ENCODE measurements at regions of chr18 and their contacts with region 1.

Region 1: DNA sequence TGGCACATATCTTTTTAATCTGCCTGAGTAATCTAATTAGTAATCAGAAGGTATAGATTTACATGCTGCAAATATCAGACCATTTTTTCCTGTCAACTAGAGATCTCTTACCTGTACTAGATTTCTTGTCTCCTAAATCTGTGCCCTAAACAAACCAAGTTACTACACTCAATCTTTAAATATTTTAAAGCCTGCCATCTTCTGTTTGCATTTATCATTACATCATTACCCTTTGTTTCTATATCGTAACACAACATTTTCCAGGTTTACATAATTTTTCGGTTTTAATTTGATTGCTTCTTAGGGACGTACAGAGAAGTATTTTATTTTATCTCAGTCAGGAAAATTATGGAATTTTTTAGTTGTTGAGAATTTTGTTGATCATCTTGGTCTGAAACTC is 25.7 kb downstream of the PSMA8 start:
- DNase-seq: no peak
- H3K4me3 Mint-ChIP-seq: no peak overlapping the region
- H3K27ac Mint-ChIP-seq: no peak overlapping the region
- H3K4me1 Mint-ChIP-seq: peaks cover 2% of the 10 kb centered on the region
- H3K27me3 Mint-ChIP-seq: no peaks in the 10 kb centered on the region

Region 2: GRCh38 chr18:25921677-25922421 is 237.5 kb before region 1 on chr18:
- CTCF ChIA-PET with region 1: interaction called, 3 read pairs
- intact Hi-C with region 1: loop called (anchors 1 kb)
- DNase-seq: peak; percentile 65
- H3K4me3 Mint-ChIP-seq: no peak overlapping the region
- H3K27ac Mint-ChIP-seq: no peak overlapping the region
- H3K4me1 Mint-ChIP-seq: no peaks in the 10 kb centered on the region
- H3K27me3 Mint-ChIP-seq: peaks cover 3% of the 10 kb centered on the region

Region 3: DNA sequence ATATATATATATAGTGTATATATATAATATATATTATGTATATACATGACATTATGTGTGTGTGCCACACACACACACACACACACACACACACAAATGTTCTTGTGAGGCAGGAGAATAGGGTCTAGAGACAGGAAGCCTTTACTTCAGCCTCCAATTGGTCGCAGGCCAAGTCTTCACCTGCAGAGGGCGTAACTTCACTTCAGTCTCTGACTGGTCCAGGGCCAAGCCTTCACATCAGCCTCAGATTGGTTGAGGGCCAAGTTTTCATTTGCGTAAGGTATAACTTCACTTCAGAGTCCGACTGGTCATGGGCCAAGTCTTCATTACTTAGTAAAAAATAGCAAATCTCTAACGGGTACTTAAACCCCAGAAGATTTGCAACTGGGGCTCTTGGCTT is 55.8 kb before region 1 on chr18:
- CTCF ChIA-PET with region 1: interaction called, 3 read pairs
- intact Hi-C with region 1: loop called (anchors 1 kb)
- DNase-seq: peak; percentile 79
- H3K4me3 Mint-ChIP-seq: no peak overlapping the region
- H3K27ac Mint-ChIP-seq: no peak overlapping the region
- H3K4me1 Mint-ChIP-seq: no peaks in the 10 kb centered on the region
- H3K27me3 Mint-ChIP-seq: no peaks in the 10 kb centered on the region

Measured in activated naive CD4-positive, alpha-beta T cell treated with anti-CD3 and anti-CD28 coated beads for 36 hours (primary cell).